ENCODE measurements at regions of chr1 and their contacts with region 1.

Region 1: GRCh38 chr1:91732291-91733107 is 153.5 kb downstream of the TGFBR3 start:
- DNase-seq: peak; percentile 66
- H3K4me3 ChIP-seq: no peak overlapping the region
- H3K27ac ChIP-seq: no peak overlapping the region
- H3K4me1 ChIP-seq: peaks cover 30% of the 10 kb centered on the region
- H3K27me3 ChIP-seq: no peaks in the 10 kb centered on the region
- CTCF ChIP-seq: no peak

Region 2: DNA sequence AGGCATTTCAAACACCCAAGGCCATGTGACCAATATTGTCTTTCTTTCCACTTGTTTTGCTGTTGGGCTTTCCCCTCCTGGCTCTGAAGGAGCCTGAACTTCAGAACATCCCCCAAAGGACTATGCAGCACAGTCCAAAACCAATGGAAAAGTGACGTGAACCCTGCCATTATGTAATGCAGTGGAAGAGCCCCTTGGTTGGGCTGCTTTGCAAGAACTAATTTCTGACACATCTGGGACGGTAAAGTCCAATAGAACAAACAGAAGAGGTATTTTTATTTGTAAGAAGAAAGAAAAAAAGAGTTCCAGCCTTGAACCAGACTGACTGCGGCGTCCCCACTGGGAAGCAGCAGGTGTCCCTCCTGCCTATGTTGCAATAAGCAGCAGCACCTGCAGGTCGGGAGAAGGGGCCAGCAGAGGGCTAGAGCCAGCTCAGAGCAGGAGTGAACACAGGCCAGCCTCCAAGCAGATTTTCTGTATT is 115.2 kb before region 1 on chr1:
- CTCF ChIA-PET with region 1: no interaction called
- dilution Hi-C with region 1: no loop called
- in situ Hi-C with region 1: no loop called
- intact Hi-C with region 1: loop called (anchors 10 kb)
- DNase-seq: no peak
- H3K4me3 ChIP-seq: no peak overlapping the region
- H3K27ac ChIP-seq: no peak overlapping the region
- H3K4me1 ChIP-seq: no peaks in the 10 kb centered on the region
- H3K27me3 ChIP-seq: no peaks in the 10 kb centered on the region
- CTCF ChIP-seq: peak in 1 of 2 donors; percentile 14

Region 3: GRCh38 chr1:91697416-91697815 is 35.1 kb before region 1 on chr1:
- CTCF ChIA-PET with region 1: no interaction called
- dilution Hi-C with region 1: no loop called
- in situ Hi-C with region 1: no loop called
- intact Hi-C with region 1: no loop called
- DNase-seq: no peak
- H3K4me3 ChIP-seq: no peak overlapping the region
- H3K27ac ChIP-seq: no peak overlapping the region
- H3K4me1 ChIP-seq: no peaks in the 10 kb centered on the region
- H3K27me3 ChIP-seq: peaks cover 8% of the 10 kb centered on the region
- CTCF ChIP-seq: no peak